MCF 10A (cell line): ENCODE measurements at regions of chr5 and their contacts with region 1.

Region 1: DNA sequence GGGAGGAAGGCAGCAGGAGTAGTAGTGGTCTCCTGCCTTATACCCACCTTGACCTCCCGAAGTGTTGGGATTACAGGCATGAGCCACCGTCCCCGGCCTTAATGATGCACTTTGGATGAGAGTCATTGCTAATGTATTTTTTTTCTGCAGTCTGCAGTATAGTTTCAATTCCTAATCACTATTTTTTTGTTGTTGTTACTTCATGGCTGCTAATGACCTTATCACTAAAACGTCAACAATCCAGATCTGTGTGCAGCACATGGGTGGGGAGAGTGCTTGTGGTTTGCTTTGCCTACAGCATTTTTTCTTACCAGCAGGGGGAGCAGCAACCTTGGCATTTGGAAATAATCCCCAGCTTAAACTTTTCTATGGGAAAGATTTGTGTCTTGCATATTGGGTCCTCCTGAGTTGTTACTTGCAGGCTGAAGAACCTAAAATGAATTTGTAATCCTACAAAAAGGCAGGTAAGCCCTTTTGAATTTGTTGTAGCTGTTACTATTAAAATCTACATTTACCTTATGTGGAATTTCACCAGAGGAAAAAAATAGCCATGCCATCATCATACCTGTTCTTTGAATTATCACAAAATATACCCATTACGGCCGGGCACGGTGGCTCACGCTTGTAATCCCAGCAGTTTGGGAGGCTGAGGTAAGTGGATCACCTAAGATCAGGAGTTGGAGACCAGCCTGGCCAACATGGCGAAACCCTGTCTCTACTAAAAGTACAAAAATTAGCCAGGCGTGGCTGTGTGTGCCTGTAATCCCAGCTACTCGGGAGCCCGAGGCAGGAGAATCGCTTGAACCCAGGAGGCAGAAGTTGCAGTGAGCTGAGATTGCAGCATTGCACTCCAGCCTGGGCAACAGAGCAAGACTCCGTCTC is 6.3 kb upstream of the MED7 start:
- DNase-seq: peak; percentile 81
- H3K4me3 Mint-ChIP-seq: no peak overlapping the region
- H3K27ac Mint-ChIP-seq: no peak overlapping the region
- H3K4me1 Mint-ChIP-seq: peaks cover 6% of the 10 kb centered on the region
- H3K27me3 Mint-ChIP-seq: no peaks in the 10 kb centered on the region
- CTCF ChIP-seq: peak; percentile 90

Region 2: DNA sequence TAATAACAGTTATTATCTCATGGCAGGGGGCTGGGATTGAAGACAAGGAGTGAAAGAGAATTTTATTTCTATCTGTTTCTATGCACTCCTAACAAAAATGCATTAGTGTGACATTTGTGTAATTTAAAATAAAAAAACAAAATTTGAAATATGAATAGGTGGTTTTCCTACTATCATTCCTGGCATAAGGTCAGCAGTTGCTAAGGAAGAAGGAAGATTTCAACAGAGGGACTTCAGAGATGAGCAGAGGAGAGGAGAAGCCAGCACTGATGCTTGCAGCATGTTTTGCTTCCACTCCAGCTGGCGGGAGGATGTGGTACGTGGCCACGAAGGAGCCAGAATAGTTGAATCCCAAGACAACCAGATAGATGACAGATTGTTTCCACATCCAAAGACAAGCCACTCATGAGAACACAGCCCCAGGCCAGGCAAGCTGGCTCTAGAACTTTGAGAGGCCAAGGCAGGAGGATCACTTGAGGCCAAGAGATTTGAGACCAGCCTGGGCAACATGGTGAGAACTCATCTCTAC is 201.1 kb before region 1 on chr5:
- CTCF ChIA-PET with region 1: no interaction called
- POLR2A ChIA-PET with region 1: no interaction called
- intact Hi-C with region 1: no loop called
- DNase-seq: no peak
- H3K4me3 Mint-ChIP-seq: no peak overlapping the region
- H3K27ac Mint-ChIP-seq: no peak overlapping the region
- H3K4me1 Mint-ChIP-seq: no peaks in the 10 kb centered on the region
- H3K27me3 Mint-ChIP-seq: no peaks in the 10 kb centered on the region
- CTCF ChIP-seq: no peak

Region 3: GRCh38 chr5:157026789-157027424 is 122.1 kb before region 1 on chr5:
- CTCF ChIA-PET with region 1: no interaction called
- POLR2A ChIA-PET with region 1: no interaction called
- intact Hi-C with region 1: no loop called
- DNase-seq: peak; percentile 63
- H3K4me3 Mint-ChIP-seq: no peak overlapping the region
- H3K27ac Mint-ChIP-seq: no peak overlapping the region
- H3K4me1 Mint-ChIP-seq: no peaks in the 10 kb centered on the region
- H3K27me3 Mint-ChIP-seq: peaks cover 47% of the 10 kb centered on the region
- CTCF ChIP-seq: peak; percentile 67

Region 4: GRCh38 chr5:157059891-157060290 is 89.1 kb before region 1 on chr5:
- CTCF ChIA-PET with region 1: no interaction called
- POLR2A ChIA-PET with region 1: no interaction called
- intact Hi-C with region 1: no loop called
- DNase-seq: peak; percentile 49
- H3K4me3 Mint-ChIP-seq: no peak overlapping the region
- H3K27ac Mint-ChIP-seq: peak overlapping the region; percentile 59
- H3K4me1 Mint-ChIP-seq: peaks cover 20% of the 10 kb centered on the region
- H3K27me3 Mint-ChIP-seq: no peaks in the 10 kb centered on the region
- CTCF ChIP-seq: no peak

Region 5: DNA sequence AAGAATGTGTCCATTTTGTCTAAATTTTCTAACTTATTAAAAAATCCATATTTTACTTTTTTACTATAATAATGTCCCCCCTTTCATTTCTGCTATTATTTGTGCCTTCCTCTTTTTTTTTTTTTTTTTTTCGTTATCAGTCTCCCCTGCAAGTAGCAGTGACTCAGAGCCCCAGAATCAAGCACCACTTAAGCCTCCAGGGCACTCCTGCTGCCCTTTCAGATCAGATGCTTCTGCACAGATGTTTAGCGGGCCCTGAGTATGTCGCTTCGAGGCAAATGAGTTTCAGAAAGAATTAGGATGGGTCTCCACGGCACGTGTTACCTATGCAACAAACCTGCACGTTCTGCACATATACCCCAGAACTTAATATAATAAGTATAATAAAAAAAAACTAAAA is 18.1 kb before region 1 on chr5:
- CTCF ChIA-PET with region 1: interaction called, 10 read pairs
- POLR2A ChIA-PET with region 1: interaction called, 19 read pairs
- intact Hi-C with region 1: no loop called
- DNase-seq: no peak
- H3K4me3 Mint-ChIP-seq: no peak overlapping the region
- H3K27ac Mint-ChIP-seq: no peak overlapping the region
- H3K4me1 Mint-ChIP-seq: no peaks in the 10 kb centered on the region
- H3K27me3 Mint-ChIP-seq: no peaks in the 10 kb centered on the region
- CTCF ChIP-seq: no peak

Region 6: GRCh38 chr5:157167214-157167621 is 18.2 kb after region 1 on chr5:
- CTCF ChIA-PET with region 1: interaction called, 20 read pairs
- POLR2A ChIA-PET with region 1: no interaction called
- intact Hi-C with region 1: no loop called
- DNase-seq: no peak
- H3K4me3 Mint-ChIP-seq: no peak overlapping the region
- H3K27ac Mint-ChIP-seq: no peak overlapping the region
- H3K4me1 Mint-ChIP-seq: no peaks in the 10 kb centered on the region
- H3K27me3 Mint-ChIP-seq: peaks cover 15% of the 10 kb centered on the region
- CTCF ChIP-seq: no peak

Region 7: GRCh38 chr5:157265714-157266285 is 116.8 kb after region 1 on chr5 and contains the start of gene CYFIP2:
- CTCF ChIA-PET with region 1: interaction called, 12 read pairs
- POLR2A ChIA-PET with region 1: no interaction called
- intact Hi-C with region 1: no loop called
- DNase-seq: peak; percentile 56
- H3K4me3 Mint-ChIP-seq: peak within 1 kb of the TSS; percentile 85
- H3K27ac Mint-ChIP-seq: no peak within 1 kb of the TSS
- H3K4me1 Mint-ChIP-seq: peaks cover 32% of the 10 kb centered on the region
- H3K27me3 Mint-ChIP-seq: peaks cover 10% of the 10 kb centered on the region
- CTCF ChIP-seq: no peak
- total RNA-seq, gene CYFIP2: 50.5 and 50.8 TPM in 2 replicates

Region 8: DNA sequence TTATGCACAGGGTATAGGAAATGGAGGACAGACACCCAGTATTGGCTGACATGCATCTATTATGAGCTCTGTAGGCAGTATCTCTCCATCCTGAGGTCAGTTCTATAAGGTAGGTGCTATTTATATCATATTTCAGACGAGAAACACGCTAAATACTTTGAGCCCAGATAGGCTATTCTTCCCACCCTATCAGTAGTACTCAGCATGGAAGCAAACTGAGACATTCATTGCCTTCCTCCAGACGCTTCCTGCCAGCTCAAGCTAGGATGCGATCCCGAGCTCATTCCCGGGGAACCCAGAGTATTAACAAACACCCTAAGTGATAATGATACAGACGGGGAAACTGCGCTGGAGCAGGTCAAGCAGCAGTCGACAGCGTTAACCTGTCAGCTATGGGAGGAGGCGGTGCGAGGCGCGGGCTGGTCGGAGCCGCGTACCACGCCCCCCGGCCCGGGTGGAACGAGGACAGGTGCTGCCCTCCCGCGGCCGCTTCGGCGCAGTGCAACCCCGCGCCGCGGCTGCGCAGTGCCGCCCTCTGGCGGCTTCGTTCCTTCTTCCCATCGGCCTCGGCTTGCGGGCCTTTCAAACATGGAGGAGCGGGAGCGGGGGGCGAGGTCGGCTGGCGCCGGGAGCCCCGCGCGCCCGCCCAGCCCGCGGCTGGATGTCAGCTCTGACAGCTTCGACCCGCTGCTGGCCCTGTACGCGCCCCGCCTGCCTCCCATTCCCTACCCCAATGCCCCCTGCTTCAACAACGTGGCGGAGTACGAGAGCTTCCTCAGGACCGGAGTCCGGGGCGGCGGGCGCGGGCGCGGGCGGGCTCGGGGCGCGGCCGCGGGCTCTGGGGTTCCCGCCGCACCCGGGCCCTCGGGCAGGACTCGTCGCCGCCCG is 594.4 kb after region 1 on chr5 and contains the start of gene LSM11:
- CTCF ChIA-PET with region 1: interaction called, 8 read pairs
- POLR2A ChIA-PET with region 1: no interaction called
- intact Hi-C with region 1: loop called (anchors 1 kb)
- DNase-seq: peak; percentile 90
- H3K4me3 Mint-ChIP-seq: peak within 1 kb of the TSS; percentile 78
- H3K27ac Mint-ChIP-seq: peak within 1 kb of the TSS; percentile 68
- H3K4me1 Mint-ChIP-seq: peaks cover 18% of the 10 kb centered on the region
- H3K27me3 Mint-ChIP-seq: no peaks in the 10 kb centered on the region
- CTCF ChIP-seq: peak; percentile 100
- total RNA-seq, gene LSM11: 3.4 and 4.5 TPM in 2 replicates